Left colon (tissue), 2 donors: ENCODE measurements at regions of chr6 and their contacts with region 1.

Region 1: DNA sequence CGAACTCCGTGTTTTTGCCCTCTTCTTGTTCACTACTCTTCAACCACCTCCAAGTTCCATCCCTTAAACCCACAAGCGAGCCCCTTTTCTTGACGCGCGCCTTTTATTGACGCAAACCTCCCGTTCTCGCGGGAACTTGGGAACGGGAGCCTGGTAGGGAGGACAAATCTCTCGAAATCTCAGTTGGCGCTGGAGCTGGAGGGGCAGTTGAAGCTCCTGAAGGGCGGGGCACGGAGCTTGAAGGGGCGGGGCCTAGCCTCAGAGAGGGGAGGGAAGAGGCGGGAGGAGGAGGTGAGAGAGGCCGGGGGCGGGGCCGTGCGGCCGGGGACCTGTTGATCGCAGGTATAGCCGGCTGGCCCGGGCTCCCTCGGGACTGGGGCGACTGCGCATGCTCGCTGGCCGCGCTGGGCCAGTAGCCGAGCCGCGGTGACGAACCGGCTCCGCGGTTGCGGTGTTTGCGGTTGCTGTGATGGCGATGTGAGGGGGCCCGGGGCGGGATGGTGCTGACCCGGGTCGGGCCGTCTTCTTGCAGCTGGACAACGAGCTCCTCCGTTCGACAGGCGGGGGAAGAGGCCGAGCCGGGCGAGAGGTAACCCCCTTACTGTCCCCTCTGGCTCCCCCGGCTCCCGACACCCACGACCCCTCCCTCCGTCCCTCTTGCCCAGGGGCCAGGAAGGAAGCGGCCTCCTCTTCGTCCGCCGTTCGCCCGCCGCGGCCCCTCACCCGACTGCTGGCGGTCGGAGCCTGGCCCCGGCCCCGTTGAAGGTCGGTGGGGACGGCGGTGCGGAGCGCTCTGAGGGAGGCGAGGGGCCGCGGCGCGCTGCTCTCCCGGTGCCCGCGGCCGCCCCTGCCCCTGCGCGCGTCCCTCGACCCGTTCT is at the start of gene FAM135A:
- DNase-seq: peak; percentile 99
- ATAC-seq: peak; percentile 90
- total RNA-seq, gene FAM135A: 54.4 to 68.4 TPM

Region 2: DNA sequence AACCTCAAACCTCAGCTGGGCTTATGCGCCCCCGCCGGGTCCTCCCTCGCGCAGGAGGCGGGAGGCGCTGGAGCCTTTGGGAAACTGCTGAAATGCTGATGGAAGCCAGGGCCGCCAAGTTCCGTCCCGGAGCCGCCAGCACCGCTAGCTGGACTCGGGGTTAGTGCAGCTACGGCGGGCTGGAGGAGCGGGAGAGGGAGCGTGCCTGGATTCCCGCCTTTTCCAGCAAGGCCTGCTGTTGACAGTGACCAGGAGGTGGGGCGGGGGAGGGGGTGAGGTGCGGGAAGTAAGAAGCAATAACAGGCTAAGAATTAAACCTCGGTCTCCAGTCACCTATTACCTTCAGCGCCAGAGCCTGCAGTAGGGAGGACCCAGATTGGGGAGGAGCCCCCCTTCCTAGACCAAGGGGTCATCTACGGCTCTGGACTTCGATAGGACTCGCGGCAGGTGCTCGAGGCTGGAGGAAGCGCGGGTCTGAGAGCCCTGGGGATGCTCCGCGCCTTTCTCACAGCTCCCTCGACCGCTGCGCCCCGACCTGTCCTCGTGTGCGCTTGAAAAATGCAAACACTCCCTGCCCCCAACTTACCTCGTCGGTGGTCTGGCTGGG is 130.9 kb before region 1 on chr6:
- intact Hi-C with region 1: no loop called
- DNase-seq: no peak
- ATAC-seq: no peak

Region 3: DNA sequence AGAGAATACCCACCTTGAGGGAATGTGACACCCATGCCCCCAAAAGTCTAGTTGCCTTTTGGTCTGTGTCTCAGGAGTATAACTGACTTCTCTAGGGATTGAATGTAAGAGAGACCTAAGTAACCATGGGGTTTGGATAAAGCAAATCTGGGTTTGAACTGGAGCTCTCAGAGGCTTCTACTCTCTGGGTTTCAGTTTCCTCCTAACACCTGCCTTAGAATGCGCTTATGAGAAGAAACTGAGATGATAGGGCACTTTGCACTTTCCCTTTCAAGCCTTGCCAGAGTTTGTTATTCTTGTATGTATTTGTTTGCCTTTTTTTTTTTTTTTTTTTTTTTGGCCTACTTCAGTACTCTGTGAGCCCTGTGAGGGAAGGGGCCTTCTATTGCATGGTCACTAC is 172.8 kb after region 1 on chr6:
- intact Hi-C with region 1: no loop called
- DNase-seq: no peak
- ATAC-seq: no peak

Region 4: GRCh38 chr6:70667711-70668498 is 254.6 kb after region 1 on chr6 and contains the start of gene SMAP1:
- intact Hi-C with region 1: loop called in 1 of 2 experiments (anchors 5 kb)
- DNase-seq: peak; percentile 95 to 98
- ATAC-seq: peak; percentile 94
- total RNA-seq, gene SMAP1: 47.4 to 48.4 TPM